ENCODE measurements at regions of chr5 and their contacts with region 1.

Region 1: GRCh38 chr5:170420780-170421412 is 31.7 kb upstream of the KCNMB1 start:
- DNase-seq: peak; percentile 64 to 65
- H3K4me3 ChIP-seq: no peak overlapping the region
- H3K4me3 Mint-ChIP-seq: no peak overlapping the region
- H3K27ac Mint-ChIP-seq: no peak overlapping the region
- H3K4me1 ChIP-seq: peaks cover 3% of the 10 kb centered on the region; the same call in 1 of the 2 replicates
- H3K4me1 Mint-ChIP-seq: no peaks in the 10 kb centered on the region
- H3K27me3 ChIP-seq: no peaks in the 10 kb centered on the region; the same call in 1 of the 2 replicates
- H3K27me3 Mint-ChIP-seq: peaks cover 20% of the 10 kb centered on the region
- CTCF ChIP-seq: peak; percentile 59 to 79

Region 2: GRCh38 chr5:170028124-170028523 is 392.8 kb before region 1 on chr5:
- CTCF ChIA-PET with region 1: no interaction called
- POLR2A ChIA-PET with region 1: no interaction called
- intact Hi-C with region 1: no loop called
- DNase-seq: no peak
- H3K4me3 ChIP-seq: no peak overlapping the region
- H3K4me3 Mint-ChIP-seq: no peak overlapping the region
- H3K27ac Mint-ChIP-seq: no peak overlapping the region
- H3K4me1 ChIP-seq: no peaks in the 10 kb centered on the region
- H3K4me1 Mint-ChIP-seq: no peaks in the 10 kb centered on the region
- H3K27me3 ChIP-seq: no peaks in the 10 kb centered on the region; the same call in none of the 2 replicates
- H3K27me3 Mint-ChIP-seq: peaks cover 28% of the 10 kb centered on the region
- CTCF ChIP-seq: no peak

Region 3: GRCh38 chr5:170100066-170100943 is 320.6 kb before region 1 on chr5:
- CTCF ChIA-PET with region 1: no interaction called
- POLR2A ChIA-PET with region 1: no interaction called
- intact Hi-C with region 1: loop called (anchors 1 kb)
- DNase-seq: peak; percentile 77 to 81
- H3K4me3 ChIP-seq: no peak overlapping the region
- H3K4me3 Mint-ChIP-seq: no peak overlapping the region
- H3K27ac Mint-ChIP-seq: no peak overlapping the region
- H3K4me1 ChIP-seq: no peaks in the 10 kb centered on the region
- H3K4me1 Mint-ChIP-seq: peaks cover 4% of the 10 kb centered on the region
- H3K27me3 ChIP-seq: no peaks in the 10 kb centered on the region; the same call in 1 of the 2 replicates
- H3K27me3 Mint-ChIP-seq: peaks cover 11% of the 10 kb centered on the region
- CTCF ChIP-seq: peak; percentile 58 to 68

Region 4: GRCh38 chr5:170225326-170226128 is 195.4 kb before region 1 on chr5:
- CTCF ChIA-PET with region 1: interaction called, 5 read pairs
- POLR2A ChIA-PET with region 1: no interaction called
- intact Hi-C with region 1: loop called (anchors 1 kb)
- DNase-seq: peak; percentile 59 to 69
- H3K4me3 ChIP-seq: no peak overlapping the region
- H3K4me3 Mint-ChIP-seq: no peak overlapping the region
- H3K27ac Mint-ChIP-seq: no peak overlapping the region
- H3K4me1 ChIP-seq: no peaks in the 10 kb centered on the region
- H3K4me1 Mint-ChIP-seq: no peaks in the 10 kb centered on the region
- H3K27me3 ChIP-seq: no peaks in the 10 kb centered on the region; the same call in 1 of the 2 replicates
- H3K27me3 Mint-ChIP-seq: peaks cover 8% of the 10 kb centered on the region
- CTCF ChIP-seq: peak; percentile 69 to 75

Region 5: GRCh38 chr5:170267431-170268152 is 153.3 kb before region 1 on chr5:
- CTCF ChIA-PET with region 1: no interaction called
- POLR2A ChIA-PET with region 1: no interaction called
- intact Hi-C with region 1: loop called (anchors 1 kb)
- DNase-seq: peak; percentile 60 to 66
- H3K4me3 ChIP-seq: no peak overlapping the region
- H3K4me3 Mint-ChIP-seq: no peak overlapping the region
- H3K27ac Mint-ChIP-seq: no peak overlapping the region
- H3K4me1 ChIP-seq: no peaks in the 10 kb centered on the region
- H3K4me1 Mint-ChIP-seq: no peaks in the 10 kb centered on the region
- H3K27me3 ChIP-seq: peaks cover 1% of the 10 kb centered on the region; the same call in 1 of the 2 replicates
- H3K27me3 Mint-ChIP-seq: peaks cover 35% of the 10 kb centered on the region
- CTCF ChIP-seq: peak; percentile 86 to 89

Measured in Caco-2 (cell line).